ENCODE measurements at regions of chr17 and their contacts with region 1.

Region 1: DNA sequence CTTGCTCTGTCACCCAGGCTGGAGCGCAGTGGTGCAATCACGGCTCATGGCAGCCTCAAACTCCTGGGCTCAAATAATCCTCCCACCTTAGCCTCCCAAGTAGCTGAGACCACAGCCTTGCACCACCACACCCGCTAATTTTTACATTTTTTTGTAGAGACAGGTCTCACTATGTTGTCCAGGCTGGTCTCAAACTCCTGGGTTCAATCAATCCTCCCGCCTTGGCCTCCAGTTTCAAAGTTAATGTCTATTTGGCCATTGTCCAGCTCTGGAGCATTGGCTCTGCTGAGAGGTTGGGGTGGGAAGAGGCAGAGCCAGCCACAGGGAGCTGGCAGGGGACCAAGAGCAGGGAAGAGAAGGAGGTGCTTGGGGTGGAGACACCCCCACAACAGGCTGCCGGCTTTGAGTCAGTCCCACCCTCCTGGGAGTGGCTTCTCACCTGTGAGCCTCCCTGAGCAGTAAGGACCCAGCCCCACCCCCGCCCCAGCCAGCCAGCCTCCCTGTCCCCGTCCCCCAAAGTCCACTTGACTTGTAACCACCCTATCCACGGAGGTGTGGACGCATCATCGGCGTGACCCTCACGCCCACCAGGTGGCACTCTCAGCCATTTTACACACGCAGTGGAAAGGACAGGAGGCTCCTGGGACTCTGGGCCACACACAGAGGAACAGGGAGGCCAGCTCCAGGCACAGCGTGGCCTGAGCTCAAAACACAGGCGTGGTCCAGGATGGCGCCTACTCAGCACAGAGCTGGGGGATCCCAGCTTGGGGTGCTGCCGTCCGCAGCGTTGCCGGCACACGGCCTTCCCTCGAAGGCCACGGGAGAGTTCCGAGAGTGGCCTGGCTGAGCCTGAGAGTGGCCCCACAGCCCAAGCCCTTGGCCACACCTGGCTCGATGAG is 22.8 kb upstream of the PVALEF start:
- DNase-seq: peak; percentile 60
- H3K4me3 ChIP-seq: no peak overlapping the region
- H3K27ac ChIP-seq: no peak overlapping the region
- H3K4me1 ChIP-seq: peaks cover 5% of the 10 kb centered on the region
- H3K27me3 ChIP-seq: no peaks in the 10 kb centered on the region
- CTCF ChIP-seq: peak; percentile 59 to 74

Region 2: DNA sequence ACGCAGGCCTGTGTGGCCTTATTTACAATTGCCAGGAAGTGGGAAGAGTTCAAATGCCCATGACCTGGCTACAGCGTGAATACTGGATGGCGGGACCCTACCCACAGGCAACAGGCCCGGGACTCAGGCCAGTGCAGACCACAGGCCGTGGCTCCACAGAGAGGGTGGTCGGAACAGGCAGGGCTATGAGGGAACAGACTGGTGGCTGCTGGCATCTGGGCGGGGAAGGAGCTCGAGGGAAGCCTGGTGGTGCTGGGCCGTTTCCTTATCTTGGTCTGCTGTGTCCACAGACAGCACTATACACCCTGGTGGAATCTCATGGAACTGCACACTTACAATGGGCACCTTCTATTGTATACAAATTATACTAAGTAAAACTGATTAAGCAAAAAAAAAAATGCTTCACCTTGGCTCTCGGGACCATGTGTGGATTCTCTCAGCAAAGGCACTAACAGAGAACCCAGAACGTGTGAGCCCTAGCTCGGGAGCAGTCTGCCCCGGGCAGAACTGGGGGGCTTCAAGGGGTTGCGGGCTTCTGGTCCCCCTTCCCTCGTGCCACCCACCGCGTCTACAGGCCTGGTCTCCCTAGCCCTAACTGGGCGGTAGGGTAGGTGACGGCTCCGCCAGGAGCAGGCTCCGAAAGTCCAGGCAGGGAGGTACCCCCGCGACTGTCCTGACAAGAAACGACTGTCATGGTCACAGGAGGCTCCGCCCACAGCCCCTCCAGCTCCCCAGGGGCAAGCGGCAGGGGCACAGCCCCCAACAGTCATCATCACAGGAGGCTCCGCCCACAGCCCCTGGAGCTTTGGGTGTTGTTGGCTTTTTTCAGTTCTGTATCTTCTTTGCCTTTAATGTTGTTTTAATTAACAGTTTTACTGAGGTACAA is 58.4 kb after region 1 on chr17:
- CTCF ChIA-PET with region 1: no interaction called
- dilution Hi-C with region 1: loop called (anchors 5 kb)
- in situ Hi-C with region 1: no loop called
- intact Hi-C with region 1: loop called (anchors 1 kb)
- DNase-seq: peak; percentile 54
- H3K4me3 ChIP-seq: no peak overlapping the region
- H3K27ac ChIP-seq: no peak overlapping the region
- H3K4me1 ChIP-seq: peaks cover 15% of the 10 kb centered on the region
- H3K27me3 ChIP-seq: no peaks in the 10 kb centered on the region
- CTCF ChIP-seq: peak; percentile 63 to 75

Region 3: GRCh38 chr17:81238817-81239600 is 96.5 kb after region 1 on chr17 and contains the starts of genes NDUFAF8 and TEPSIN:
- CTCF ChIA-PET with region 1: interaction called, 3 read pairs
- dilution Hi-C with region 1: loop called (anchors 5 kb)
- in situ Hi-C with region 1: loop called in 1 of 2 experiments (anchors 10 kb)
- intact Hi-C with region 1: loop called (anchors 1 kb)
- DNase-seq: peak; percentile 100
- H3K4me3 ChIP-seq: peak within 1 kb of the TSS; percentile 71 to 94 (median 91)
- H3K27ac ChIP-seq: peak within 1 kb of the TSS; percentile 75
- H3K4me1 ChIP-seq: peaks cover 19% of the 10 kb centered on the region
- H3K27me3 ChIP-seq: no peaks in the 10 kb centered on the region
- CTCF ChIP-seq: no peak
- total RNA-seq, gene NDUFAF8: 14.7 to 98.1 TPM
- total RNA-seq, gene TEPSIN: 15.7 to 25.7 TPM

Measured in mammary epithelial cell (primary cell).